ENCODE measurements at regions of chr3 and their contacts with region 1.

Region 1: GRCh38 chr3:9731206-9732079 is at the start of gene BRPF1:
- DNase-seq: peak; percentile 100
- H3K4me3 ChIP-seq: peak within 1 kb of the TSS; percentile 29 to 99 (median 91)
- H3K27ac ChIP-seq: peak within 1 kb of the TSS; percentile 92 to 100 (median 99)
- H3K4me1 ChIP-seq: peaks cover 19 to 20% of the 10 kb centered on the region in 2 donors
- H3K27me3 ChIP-seq: no peaks in the 10 kb centered on the region
- CTCF ChIP-seq: peak in 1 of 6 experiments; percentile 19
- POLR2A ChIP-seq: peak in 1 of 2 donors; percentile 58
- total RNA-seq, gene BRPF1: 19.4 to 36.6 (median 20.3) TPM

Region 2: DNA sequence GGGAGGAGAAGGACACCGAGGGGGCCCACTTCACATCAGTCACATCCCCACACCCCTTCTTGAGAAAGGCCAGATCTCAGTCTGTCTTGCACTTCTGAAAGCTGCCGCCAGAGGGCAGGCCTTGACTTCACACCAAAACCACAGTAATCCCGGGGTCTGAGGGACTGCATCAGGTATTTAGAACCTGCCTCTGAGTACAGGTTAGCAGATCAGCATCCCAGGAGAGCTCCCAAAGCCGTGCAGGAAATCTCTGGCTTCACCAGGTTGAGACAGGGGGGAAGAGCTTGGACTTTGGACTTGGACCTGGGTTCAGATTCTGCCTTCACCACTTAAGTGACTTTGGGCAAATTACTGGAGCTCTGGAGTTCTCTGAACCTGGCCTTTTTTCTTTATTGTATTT is 228.2 kb before region 1 on chr3:
- intact Hi-C with region 1: loop called (anchors 10 kb)
- DNase-seq: peak; percentile 79 to 84
- H3K4me3 ChIP-seq: no peak overlapping the region
- H3K27ac ChIP-seq: no peak overlapping the region
- H3K4me1 ChIP-seq: peaks cover 7 to 14% of the 10 kb centered on the region in 2 donors
- H3K27me3 ChIP-seq: no peaks in the 10 kb centered on the region
- CTCF ChIP-seq: peak; percentile 55 to 86 (median 80)
- POLR2A ChIP-seq: no peak

Region 3: DNA sequence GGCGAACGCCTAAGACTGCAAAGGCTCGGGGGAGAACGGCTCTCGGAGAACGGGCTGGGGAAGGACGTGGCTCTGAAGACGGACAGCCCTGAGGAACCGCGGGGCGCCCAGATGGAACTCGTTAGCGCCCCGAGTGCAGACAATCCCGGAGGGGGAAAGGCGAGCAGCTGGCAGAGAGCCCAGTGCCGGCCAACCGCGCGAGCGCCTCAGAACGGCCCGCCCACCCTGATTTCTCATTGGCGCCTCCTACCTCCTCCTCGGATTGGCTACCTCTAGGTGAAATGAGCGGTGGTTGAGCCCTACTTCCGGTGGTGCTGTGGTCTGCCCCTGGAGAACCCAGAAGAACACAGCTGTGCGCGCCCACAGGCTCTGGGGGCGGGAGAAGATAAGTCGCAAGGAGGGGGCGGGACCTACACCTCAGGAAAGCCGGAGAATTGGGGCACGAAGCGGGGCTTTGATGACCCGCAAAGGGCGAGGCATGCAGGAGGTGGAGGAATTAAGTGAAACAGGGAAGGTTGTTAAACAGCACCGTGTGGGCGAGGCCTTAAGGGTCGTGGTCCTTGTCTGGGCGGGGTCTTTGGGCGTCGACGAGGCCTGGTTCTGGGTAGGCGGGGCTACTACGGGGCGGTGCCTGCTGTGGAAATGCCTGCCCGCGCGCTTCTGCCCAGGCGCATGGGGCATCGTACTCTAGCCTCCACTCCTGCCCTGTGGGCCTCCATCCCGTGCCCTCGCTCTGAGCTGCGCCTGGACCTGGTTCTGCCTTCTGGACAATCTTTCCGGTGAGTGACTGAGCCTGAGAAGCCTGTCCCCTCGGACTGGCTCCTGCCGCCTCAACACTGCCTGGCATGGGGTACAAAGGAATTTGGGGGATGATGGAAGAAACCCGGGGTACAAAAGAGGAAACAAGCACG is 18.5 kb after region 1 on chr3 and contains the start of gene OGG1:
- intact Hi-C with region 1: loop called (anchors 2 kb)
- DNase-seq: peak; percentile 99
- H3K4me3 ChIP-seq: peak within 1 kb of the TSS; percentile 21 to 65 (median 42)
- H3K27ac ChIP-seq: peak within 1 kb of the TSS; percentile 76 to 90 (median 82)
- H3K4me1 ChIP-seq: peaks cover 9 to 25% of the 10 kb centered on the region in 2 donors
- H3K27me3 ChIP-seq: no peaks in the 10 kb centered on the region
- CTCF ChIP-seq: no peak
- POLR2A ChIP-seq: peak in 1 of 2 donors; percentile 66
- total RNA-seq, gene OGG1: 23.7 to 46.6 (median 30.3) TPM

Region 4: DNA sequence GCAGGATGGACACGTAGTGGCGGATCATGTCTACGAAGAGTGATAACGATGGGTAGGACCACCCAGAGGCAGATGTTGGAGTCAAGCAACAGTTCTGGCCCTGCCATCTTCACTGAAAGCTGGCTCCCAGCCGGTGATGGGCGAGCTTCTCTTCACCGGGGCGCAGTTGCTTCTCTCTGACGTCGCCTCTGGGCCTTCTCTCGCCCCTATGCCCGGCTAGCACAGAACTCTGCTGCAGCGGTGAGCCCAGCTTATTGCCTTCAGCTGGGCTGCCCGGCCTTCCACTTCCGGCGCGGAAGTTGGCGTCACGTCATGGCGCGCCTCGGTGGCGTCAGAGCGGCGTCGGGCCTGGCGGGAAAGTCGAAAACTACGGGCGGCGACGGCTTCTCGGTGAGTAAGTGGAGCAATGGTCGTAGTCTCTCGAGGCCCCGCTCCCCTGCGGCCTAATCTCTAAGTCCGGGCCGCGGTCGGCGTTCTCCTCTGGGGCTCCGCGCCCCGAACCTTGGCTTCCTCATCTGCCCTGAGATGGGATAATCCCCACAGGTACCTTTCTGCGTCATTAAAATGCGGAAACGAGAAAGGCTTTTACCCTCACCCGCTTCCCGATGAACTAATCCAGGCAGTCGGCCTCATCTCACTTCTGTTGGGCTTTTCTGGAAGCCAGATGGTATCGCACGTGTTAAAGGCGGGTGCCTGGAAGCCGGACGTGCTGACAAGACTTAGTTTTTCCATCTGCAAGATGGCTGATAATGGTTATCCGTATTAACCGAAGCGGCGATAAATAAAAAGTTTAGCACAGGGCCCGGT is 294.8 kb after region 1 on chr3 and contains the start of gene FANCD2:
- intact Hi-C with region 1: no loop called
- DNase-seq: peak; percentile 83 to 86
- H3K4me3 ChIP-seq: peak within 1 kb of the TSS; percentile 38 to 82 (median 78)
- H3K27ac ChIP-seq: peak within 1 kb of the TSS; percentile 46 to 67 (median 51)
- H3K4me1 ChIP-seq: peaks cover 16% of the 10 kb centered on the region in 2 donors
- H3K27me3 ChIP-seq: no peaks in the 10 kb centered on the region
- CTCF ChIP-seq: peak in 1 of 6 experiments; percentile 10
- POLR2A ChIP-seq: peak; percentile 65 to 80
- total RNA-seq, gene FANCD2: 2.0 to 7.9 (median 4.4) TPM